Mammary epithelial cell (primary cell): ENCODE measurements at regions of chr12 and their contacts with region 1.

Region 1: DNA sequence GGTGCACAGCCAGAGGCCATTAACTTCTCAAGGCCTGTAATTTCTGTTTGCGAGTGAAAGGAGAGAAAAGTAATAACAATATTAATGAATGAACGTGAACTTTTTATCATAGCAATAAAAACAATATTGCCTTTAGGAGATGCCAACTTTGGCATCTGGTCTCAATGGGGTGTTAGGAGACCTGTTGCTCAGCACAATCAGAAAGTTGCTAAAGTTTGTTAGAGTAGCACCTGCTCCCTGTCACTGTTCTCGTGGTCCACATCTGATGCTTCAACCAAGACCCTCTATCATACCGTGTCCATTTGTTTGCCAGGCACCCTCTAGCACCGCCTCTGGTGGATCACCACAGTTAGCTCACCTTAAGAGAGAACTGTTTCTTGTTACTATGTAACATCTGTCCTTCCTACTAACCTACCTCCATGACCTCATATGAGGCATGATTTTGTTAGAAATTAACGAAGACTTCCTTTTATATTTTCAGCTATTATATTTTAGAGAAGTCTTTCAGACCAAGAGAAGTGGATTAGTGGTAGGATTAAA is 12.5 kb upstream of the CLEC4E start:
- DNase-seq: no peak
- H3K4me3 ChIP-seq: no peak overlapping the region
- H3K27ac ChIP-seq: no peak overlapping the region
- H3K4me1 ChIP-seq: peaks cover 4% of the 10 kb centered on the region
- H3K27me3 ChIP-seq: no peaks in the 10 kb centered on the region
- CTCF ChIP-seq: no peak

Region 2: DNA sequence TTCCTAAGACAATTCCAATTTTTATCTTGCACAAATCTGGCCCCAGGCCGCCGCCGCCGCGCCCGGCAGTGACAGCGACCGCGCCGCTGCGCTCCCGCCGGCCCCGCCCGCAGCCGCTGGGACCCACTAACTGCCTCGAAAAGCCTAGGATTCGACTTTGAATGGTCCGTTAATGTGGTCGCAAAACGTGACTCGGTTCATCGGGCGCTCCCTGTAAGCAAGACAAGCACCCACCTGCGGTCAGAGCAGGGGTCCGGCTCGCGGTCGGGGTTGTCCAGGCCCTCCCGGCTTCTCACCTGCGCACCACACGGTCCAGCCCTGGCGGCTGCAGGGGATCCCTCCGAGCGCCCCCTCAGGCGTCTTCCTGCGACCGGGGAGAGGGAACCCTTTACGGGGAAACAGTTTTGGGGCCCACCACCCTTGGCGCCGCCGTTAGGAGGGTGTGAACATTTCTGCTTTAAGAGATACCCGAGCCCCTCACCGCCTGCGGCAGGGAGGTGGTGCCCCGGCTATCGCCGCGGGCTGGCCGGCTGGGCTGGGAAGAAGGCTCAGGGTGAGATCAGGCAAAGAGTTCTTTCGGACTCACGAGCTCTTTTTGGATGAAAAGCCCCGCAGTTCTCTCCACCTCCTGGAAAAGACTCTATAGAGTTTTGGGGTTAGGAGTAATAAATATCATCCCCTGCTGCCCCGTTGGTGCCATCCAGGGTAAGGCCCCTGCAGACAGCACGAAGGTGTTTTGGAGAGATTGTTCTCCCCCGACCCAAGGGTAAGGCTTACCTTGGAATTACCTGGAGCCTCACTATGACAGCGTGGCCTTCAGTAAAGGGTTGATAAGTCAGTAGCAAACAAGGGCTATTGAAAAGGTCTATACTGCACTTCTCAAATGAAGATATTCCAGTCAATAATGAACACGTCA is 534.2 kb before region 1 on chr12:
- CTCF ChIA-PET with region 1: no interaction called
- dilution Hi-C with region 1: no loop called
- in situ Hi-C with region 1: no loop called
- intact Hi-C with region 1: no loop called
- DNase-seq: no peak
- H3K4me3 ChIP-seq: no peak overlapping the region
- H3K27ac ChIP-seq: no peak overlapping the region
- H3K4me1 ChIP-seq: peaks cover 7% of the 10 kb centered on the region
- H3K27me3 ChIP-seq: peaks cover 4% of the 10 kb centered on the region
- CTCF ChIP-seq: no peak

Region 3: DNA sequence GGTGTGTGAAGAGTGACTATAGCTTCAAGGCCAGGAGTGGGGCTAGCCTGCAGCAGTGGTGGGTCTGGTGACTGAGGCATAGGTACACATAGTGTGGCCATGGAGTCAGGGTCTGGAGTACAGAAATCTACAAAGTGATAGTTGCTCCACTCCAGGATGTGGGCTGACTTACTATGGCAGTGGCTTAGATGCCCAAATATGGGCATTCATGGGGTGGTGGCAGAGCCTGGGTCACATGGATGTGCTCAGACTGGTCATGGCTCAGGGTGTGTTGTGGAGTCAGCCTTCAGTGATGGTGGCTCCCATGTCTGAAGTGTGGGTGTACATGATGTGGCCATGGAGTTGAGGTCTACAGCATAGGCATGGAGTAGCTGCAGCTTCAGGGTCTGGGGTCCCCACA is 70.1 kb before region 1 on chr12:
- CTCF ChIA-PET with region 1: no interaction called
- dilution Hi-C with region 1: no loop called
- in situ Hi-C with region 1: no loop called
- intact Hi-C with region 1: no loop called
- DNase-seq: no peak
- H3K4me3 ChIP-seq: no peak overlapping the region
- H3K27ac ChIP-seq: no peak overlapping the region
- H3K4me1 ChIP-seq: no peaks in the 10 kb centered on the region
- H3K27me3 ChIP-seq: no peaks in the 10 kb centered on the region
- CTCF ChIP-seq: no peak

Region 4: DNA sequence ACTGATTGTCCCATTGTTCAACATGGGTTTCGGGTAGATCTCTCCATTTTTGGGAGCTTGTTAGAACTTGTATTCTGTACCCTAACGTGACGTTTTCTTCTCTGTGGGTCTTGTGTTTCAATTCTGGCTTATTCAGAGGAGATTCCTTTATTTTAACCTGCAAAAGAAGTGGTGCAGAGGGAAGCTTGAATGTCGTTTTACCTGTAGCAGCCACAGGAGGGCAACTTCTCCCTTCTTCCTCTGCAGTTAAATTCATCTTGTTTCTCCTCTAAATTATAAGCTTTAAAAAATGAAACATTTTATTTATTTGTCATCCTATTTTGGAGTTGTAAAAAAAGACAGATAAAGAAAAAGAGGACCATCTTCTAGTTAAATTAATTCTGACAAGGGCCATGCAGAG is 53.5 kb before region 1 on chr12:
- CTCF ChIA-PET with region 1: no interaction called
- dilution Hi-C with region 1: loop called (anchors 5 kb)
- in situ Hi-C with region 1: no loop called
- intact Hi-C with region 1: no loop called
- DNase-seq: no peak
- H3K4me3 ChIP-seq: no peak overlapping the region
- H3K27ac ChIP-seq: no peak overlapping the region
- H3K4me1 ChIP-seq: no peaks in the 10 kb centered on the region
- H3K27me3 ChIP-seq: peaks cover 2% of the 10 kb centered on the region
- CTCF ChIP-seq: peak; percentile 12 to 15

Region 5: GRCh38 chr12:8899830-8900229 is 346.7 kb after region 1 on chr12:
- CTCF ChIA-PET with region 1: interaction called, 11 read pairs
- dilution Hi-C with region 1: no loop called
- in situ Hi-C with region 1: no loop called
- intact Hi-C with region 1: no loop called
- DNase-seq: no peak
- H3K4me3 ChIP-seq: no peak overlapping the region
- H3K27ac ChIP-seq: no peak overlapping the region
- H3K4me1 ChIP-seq: no peaks in the 10 kb centered on the region
- H3K27me3 ChIP-seq: no peaks in the 10 kb centered on the region
- CTCF ChIP-seq: no peak